ENCODE measurements at regions of chr12 and their contacts with region 1.

Region 1: GRCh38 chr12:12356886-12357718 is at the start of gene BORCS5:
- DNase-seq: peak; percentile 98 to 99 (median 99)
- H3K4me3 ChIP-seq: peak within 1 kb of the TSS; percentile 88 to 90
- H3K4me3 Mint-ChIP-seq: peak within 1 kb of the TSS; percentile 90 to 96 (median 95)
- H3K27ac ChIP-seq: peak within 1 kb of the TSS; percentile 99
- H3K27ac Mint-ChIP-seq: peak within 1 kb of the TSS; percentile 89 to 99 (median 98)
- H3K4me1 ChIP-seq: peaks cover 44% of the 10 kb centered on the region
- H3K4me1 Mint-ChIP-seq: peaks cover 29 to 76% (median 42%) of the 10 kb centered on the region in 4 donors
- H3K27me3 ChIP-seq: no peaks in the 10 kb centered on the region
- H3K27me3 Mint-ChIP-seq: no peaks in the 10 kb centered on the region
- total RNA-seq, gene BORCS5: 21.3 to 26.8 TPM

Region 2: GRCh38 chr12:12017798-12018197 is 339.3 kb before region 1 on chr12:
- CTCF ChIA-PET with region 1: no interaction called
- POLR2A ChIA-PET with region 1: no interaction called
- intact Hi-C with region 1: no loop called
- DNase-seq: no peak
- H3K4me3 ChIP-seq: no peak overlapping the region
- H3K4me3 Mint-ChIP-seq: no peak overlapping the region
- H3K27ac ChIP-seq: no peak overlapping the region
- H3K27ac Mint-ChIP-seq: peak overlapping the region in 2 of 7 donors; percentile 14 to 77
- H3K4me1 ChIP-seq: peaks cover 26% of the 10 kb centered on the region
- H3K4me1 Mint-ChIP-seq: peaks cover 27 to 55% (median 47%) of the 10 kb centered on the region in 4 donors
- H3K27me3 ChIP-seq: no peaks in the 10 kb centered on the region
- H3K27me3 Mint-ChIP-seq: no peaks in the 10 kb centered on the region

Region 3: GRCh38 chr12:12327802-12328201 is 29.3 kb before region 1 on chr12:
- CTCF ChIA-PET with region 1: interaction called, 33 read pairs
- POLR2A ChIA-PET with region 1: interaction called, 13 read pairs
- intact Hi-C with region 1: no loop called
- DNase-seq: peak; percentile 37 to 62 (median 56)
- H3K4me3 ChIP-seq: no peak overlapping the region
- H3K4me3 Mint-ChIP-seq: no peak overlapping the region
- H3K27ac ChIP-seq: no peak overlapping the region
- H3K27ac Mint-ChIP-seq: peak overlapping the region in 4 of 7 donors; percentile 25 to 82 (median 51)
- H3K4me1 ChIP-seq: peaks cover 9% of the 10 kb centered on the region
- H3K4me1 Mint-ChIP-seq: peaks cover 7 to 9% (median 9%) of the 10 kb centered on the region in 4 donors
- H3K27me3 ChIP-seq: no peaks in the 10 kb centered on the region
- H3K27me3 Mint-ChIP-seq: no peaks in the 10 kb centered on the region

Region 4: DNA sequence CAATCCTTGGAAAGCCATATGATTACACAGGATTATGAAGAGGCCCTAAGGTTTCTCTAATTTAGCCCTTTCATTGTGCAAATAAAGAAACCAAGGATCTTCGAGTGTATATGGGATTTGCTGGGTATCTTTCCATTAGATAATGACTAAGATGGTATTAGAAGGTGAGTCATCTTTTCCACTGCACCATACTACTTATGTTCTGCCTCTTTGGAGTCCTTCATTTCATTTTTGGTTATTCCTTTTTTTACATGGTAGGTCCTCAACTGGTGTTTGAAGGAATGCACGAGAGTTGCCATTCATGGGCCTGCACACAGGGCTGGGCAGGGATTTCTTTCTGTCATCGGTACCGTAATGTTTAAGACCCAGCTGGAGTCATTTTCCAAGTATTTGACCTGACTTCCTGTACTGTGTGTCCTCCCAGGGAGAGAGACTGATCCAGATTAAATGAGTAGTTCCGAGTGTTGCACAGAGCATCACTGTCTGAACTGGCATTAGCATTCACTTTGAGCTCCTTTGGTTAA is 85.5 kb after region 1 on chr12:
- CTCF ChIA-PET with region 1: no interaction called
- POLR2A ChIA-PET with region 1: interaction called, 14 read pairs
- intact Hi-C with region 1: no loop called
- DNase-seq: no peak
- H3K4me3 ChIP-seq: no peak overlapping the region
- H3K4me3 Mint-ChIP-seq: peak overlapping the region in 6 of 8 donors; percentile 8 to 85 (median 70)
- H3K27ac ChIP-seq: peak overlapping the region; percentile 65
- H3K27ac Mint-ChIP-seq: peak overlapping the region; percentile 90 to 99 (median 98)
- H3K4me1 ChIP-seq: peaks cover 95% of the 10 kb centered on the region
- H3K4me1 Mint-ChIP-seq: peaks cover 68 to 93% (median 80%) of the 10 kb centered on the region in 4 donors
- H3K27me3 ChIP-seq: no peaks in the 10 kb centered on the region
- H3K27me3 Mint-ChIP-seq: no peaks in the 10 kb centered on the region

Region 5: GRCh38 chr12:12505544-12506495 is 148.7 kb after region 1 on chr12:
- CTCF ChIA-PET with region 1: no interaction called
- POLR2A ChIA-PET with region 1: interaction called, 13 read pairs
- intact Hi-C with region 1: no loop called
- DNase-seq: peak in 4 of 5 donors; percentile 28 to 42 (median 32)
- H3K4me3 ChIP-seq: no peak overlapping the region
- H3K4me3 Mint-ChIP-seq: peak overlapping the region in 7 of 8 donors; percentile 37 to 84 (median 73)
- H3K27ac ChIP-seq: peak overlapping the region; percentile 48
- H3K27ac Mint-ChIP-seq: peak overlapping the region; percentile 66 to 95 (median 90)
- H3K4me1 ChIP-seq: peaks cover 65% of the 10 kb centered on the region
- H3K4me1 Mint-ChIP-seq: peaks cover 53 to 77% (median 61%) of the 10 kb centered on the region in 4 donors
- H3K27me3 ChIP-seq: no peaks in the 10 kb centered on the region
- H3K27me3 Mint-ChIP-seq: no peaks in the 10 kb centered on the region

Region 6: DNA sequence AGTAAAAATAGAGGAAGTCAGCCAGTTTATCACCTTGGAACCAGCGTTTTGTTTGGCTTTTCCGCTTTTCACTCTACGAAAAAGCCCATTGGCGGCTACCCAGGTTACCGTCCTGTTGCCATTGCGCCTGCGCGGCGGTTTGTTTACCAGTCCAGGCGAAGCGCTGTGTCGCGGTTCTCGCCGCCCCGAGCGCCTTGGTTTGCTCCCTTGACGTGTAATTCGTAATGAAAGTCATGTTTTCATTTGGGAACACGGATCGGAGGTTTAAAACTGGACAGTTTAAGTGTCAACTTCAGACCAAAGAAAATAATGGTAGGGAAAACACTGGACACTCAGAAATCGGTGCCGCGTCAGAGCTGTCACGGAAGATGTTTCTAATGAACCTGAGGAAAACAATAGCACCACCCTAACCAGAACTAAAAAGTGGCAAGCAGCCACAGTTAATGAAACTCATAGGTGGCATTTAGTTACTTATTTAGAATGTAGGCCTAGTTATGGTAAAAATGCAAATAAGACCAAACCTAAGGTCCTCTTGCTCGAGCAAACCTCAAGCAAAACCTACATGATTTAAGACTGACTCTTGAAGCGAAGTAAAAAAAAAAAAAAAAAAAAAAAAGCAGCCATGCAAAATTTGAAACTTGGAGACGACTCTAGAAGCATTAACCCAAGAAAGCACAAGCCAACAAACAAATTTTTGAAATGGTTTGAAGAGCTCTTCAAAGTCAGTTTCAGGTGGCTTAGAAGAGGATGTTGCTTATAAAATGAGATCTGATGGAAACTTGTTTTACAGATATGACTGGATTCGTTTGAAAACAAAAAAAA is 339.7 kb after region 1 on chr12:
- CTCF ChIA-PET with region 1: interaction called, 6 read pairs
- POLR2A ChIA-PET with region 1: interaction called, 29 read pairs
- intact Hi-C with region 1: loop called (anchors 1 kb)
- DNase-seq: peak; percentile 93 to 96 (median 95)
- H3K4me3 ChIP-seq: peak overlapping the region; percentile 37 to 74
- H3K4me3 Mint-ChIP-seq: peak overlapping the region; percentile 86 to 97 (median 94)
- H3K27ac ChIP-seq: peak overlapping the region; percentile 87
- H3K27ac Mint-ChIP-seq: peak overlapping the region; percentile 98 to 100 (median 100)
- H3K4me1 ChIP-seq: peaks cover 24% of the 10 kb centered on the region
- H3K4me1 Mint-ChIP-seq: peaks cover 16 to 41% (median 30%) of the 10 kb centered on the region in 4 donors
- H3K27me3 ChIP-seq: no peaks in the 10 kb centered on the region
- H3K27me3 Mint-ChIP-seq: no peaks in the 10 kb centered on the region

Region 7: GRCh38 chr12:12736759-12737676 is 379.9 kb after region 1 on chr12:
- CTCF ChIA-PET with region 1: interaction called, 40 read pairs
- POLR2A ChIA-PET with region 1: interaction called, 86 read pairs
- intact Hi-C with region 1: no loop called
- DNase-seq: peak; percentile 61 to 70 (median 64)
- H3K4me3 ChIP-seq: peak overlapping the region in 1 of 2 donors; percentile 46
- H3K4me3 Mint-ChIP-seq: peak overlapping the region; percentile 67 to 88 (median 76)
- H3K27ac ChIP-seq: peak overlapping the region; percentile 76
- H3K27ac Mint-ChIP-seq: peak overlapping the region; percentile 88 to 93 (median 93)
- H3K4me1 ChIP-seq: peaks cover 55% of the 10 kb centered on the region
- H3K4me1 Mint-ChIP-seq: peaks cover 24 to 59% (median 41%) of the 10 kb centered on the region in 4 donors
- H3K27me3 ChIP-seq: no peaks in the 10 kb centered on the region
- H3K27me3 Mint-ChIP-seq: no peaks in the 10 kb centered on the region

Region 8: DNA sequence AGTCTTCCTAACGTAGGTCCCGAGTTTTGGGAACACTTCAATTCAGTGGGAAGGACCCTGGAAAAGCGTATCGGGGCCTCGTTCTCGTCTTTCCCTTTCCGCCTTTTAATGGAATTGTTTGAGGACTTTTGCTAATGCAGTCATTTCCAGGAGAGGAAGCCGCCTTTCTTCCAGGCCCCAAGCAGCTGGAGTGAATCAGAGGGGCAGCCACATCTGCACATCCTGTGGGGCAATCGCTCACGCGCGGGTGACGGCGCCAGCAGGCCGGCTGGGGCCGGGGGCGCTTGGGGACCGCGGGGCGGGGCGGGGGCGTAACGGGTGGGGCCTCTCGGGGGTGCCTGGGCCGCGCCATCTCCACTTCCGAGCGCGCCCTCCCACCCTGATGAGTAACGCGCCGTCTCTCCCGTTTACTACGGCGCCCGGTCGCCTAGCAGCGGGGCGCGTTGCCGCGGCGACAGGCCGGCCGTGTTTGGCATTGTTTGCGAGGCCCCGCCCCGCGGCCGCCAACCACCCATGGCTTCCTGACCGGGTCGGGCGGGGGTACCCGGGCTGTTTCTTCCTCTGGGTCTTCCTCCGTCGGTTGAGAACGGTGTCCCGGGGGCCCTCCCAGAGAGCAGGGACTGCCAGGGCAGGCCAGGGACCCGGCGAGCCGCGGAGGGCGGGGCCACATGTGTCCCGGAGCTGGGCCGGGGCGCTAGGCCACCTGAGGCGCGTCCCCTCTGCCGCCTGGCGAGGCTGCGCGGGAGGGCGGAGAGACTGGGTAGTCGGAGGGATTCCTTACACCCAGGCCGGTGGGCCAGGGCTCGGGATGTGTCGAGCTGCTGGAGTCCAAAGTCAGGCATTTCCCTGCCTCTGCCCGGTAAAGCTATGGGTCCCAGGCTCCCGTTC is 744.0 kb after region 1 on chr12:
- CTCF ChIA-PET with region 1: no interaction called
- POLR2A ChIA-PET with region 1: no interaction called
- intact Hi-C with region 1: loop called (anchors 1 kb)
- DNase-seq: peak; percentile 95 to 97 (median 96)
- H3K4me3 ChIP-seq: peak overlapping the region; percentile 44 to 69
- H3K4me3 Mint-ChIP-seq: peak overlapping the region; percentile 85 to 93 (median 88)
- H3K27ac ChIP-seq: peak overlapping the region; percentile 93
- H3K27ac Mint-ChIP-seq: peak overlapping the region; percentile 93 to 99 (median 99)
- H3K4me1 ChIP-seq: peaks cover 40% of the 10 kb centered on the region
- H3K4me1 Mint-ChIP-seq: peaks cover 38 to 58% (median 45%) of the 10 kb centered on the region in 4 donors
- H3K27me3 ChIP-seq: no peaks in the 10 kb centered on the region
- H3K27me3 Mint-ChIP-seq: no peaks in the 10 kb centered on the region

Measured in CD4-positive, alpha-beta memory T cell (primary cell).